ENCODE measurements at regions of chr18 and their contacts with region 1.

Region 1: DNA sequence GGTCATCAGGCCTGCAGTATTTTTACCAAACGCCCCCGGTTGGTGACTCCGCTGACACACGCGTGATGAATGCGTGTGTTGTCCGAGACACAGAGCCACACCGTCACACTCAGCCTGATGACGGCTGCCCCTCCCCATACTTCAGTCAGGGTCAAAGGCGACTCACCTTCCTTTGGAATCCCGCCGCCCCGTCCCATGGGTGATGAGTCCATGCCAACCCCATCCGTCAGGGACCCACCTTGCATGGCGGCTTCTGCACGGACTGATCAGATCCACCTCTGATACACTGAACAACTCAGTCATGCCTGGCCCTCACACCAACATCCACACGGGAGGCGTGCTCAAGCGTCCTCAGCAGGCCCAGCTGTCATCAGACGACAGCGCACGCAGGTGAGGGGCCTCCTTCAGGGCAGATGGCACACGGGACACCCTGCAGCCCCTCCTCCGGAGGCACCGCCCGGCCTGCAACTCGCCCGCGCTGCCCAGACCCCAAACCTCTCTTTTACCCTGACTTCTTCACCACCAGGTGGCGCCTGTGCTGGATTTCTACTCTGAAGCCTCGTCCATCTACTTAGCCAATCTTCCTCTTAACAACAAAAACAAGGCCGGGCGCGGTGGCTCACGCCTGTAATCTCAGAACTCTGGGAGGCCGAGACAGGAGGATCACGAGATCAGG is 89.2 kb downstream of the ZNF516 start:
- DNase-seq: peak; percentile 64 to 81
- ATAC-seq: peak; percentile 58 to 84 (median 67)
- H3K4me3 ChIP-seq: no peak overlapping the region
- H3K27ac ChIP-seq: no peak overlapping the region
- H3K4me1 ChIP-seq: peaks cover 10% of the 10 kb centered on the region
- H3K27me3 ChIP-seq: no peaks in the 10 kb centered on the region
- CTCF ChIP-seq: peak; percentile 62

Region 2: GRCh38 chr18:76223403-76223802 is 182.4 kb before region 1 on chr18:
- intact Hi-C with region 1: no loop called
- DNase-seq: no peak
- ATAC-seq: no peak
- H3K4me3 ChIP-seq: no peak overlapping the region
- H3K27ac ChIP-seq: no peak overlapping the region
- H3K4me1 ChIP-seq: no peaks in the 10 kb centered on the region
- H3K27me3 ChIP-seq: no peaks in the 10 kb centered on the region
- CTCF ChIP-seq: no peak

Region 3: DNA sequence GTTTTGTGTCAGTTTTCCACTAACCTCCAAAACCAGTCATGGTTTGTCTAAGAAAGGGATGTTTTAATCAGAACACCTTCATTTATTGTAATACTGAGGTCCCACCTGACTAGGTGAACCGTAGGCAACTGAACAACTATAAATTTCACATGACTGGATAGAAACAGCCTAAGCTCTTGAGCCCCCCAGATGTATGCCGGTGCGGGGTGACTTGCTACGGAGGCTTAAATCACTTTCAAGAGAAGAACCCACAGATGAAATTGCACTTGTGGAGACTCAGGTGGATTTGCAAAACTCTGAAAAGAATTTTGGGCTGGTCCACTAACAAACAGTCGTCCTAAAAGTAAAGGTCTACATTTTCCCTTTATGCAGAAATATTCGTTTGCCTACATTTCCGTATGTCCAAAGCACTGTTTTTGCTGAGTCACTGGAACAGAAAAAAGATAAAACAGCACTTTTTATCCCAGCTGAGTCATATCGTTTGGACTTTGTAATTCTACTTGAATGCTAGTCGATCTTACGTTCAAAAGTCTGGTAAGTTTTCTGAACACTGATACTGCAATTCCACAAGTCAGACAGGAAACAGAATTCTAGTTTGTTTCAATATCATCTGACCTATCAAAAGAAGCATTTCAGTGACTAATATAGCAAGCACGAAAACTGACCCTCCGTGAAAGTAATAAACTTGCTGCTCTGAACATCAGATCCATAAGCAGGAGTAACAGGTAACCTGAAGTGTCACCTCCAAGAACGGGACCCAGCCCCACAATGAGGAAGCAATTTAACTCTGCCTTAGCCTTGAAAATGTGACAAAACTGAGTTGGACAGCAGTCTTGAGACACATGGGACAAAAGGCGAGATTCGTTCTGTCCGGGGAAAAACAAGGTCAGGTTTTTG is 71.1 kb after region 1 on chr18:
- intact Hi-C with region 1: loop called (anchors 5 kb)
- DNase-seq: no peak
- ATAC-seq: peak; percentile 20 to 49 (median 26)
- H3K4me3 ChIP-seq: peak overlapping the region; percentile 60
- H3K27ac ChIP-seq: peak overlapping the region; percentile 72
- H3K4me1 ChIP-seq: peaks cover 49% of the 10 kb centered on the region
- H3K27me3 ChIP-seq: no peaks in the 10 kb centered on the region
- CTCF ChIP-seq: no peak

Measured in psoas muscle (tissue), 8 donors.